Heart left ventricle (tissue), 16 donors: ENCODE measurements at regions of chr17 and their contacts with region 1.

Region 1: DNA sequence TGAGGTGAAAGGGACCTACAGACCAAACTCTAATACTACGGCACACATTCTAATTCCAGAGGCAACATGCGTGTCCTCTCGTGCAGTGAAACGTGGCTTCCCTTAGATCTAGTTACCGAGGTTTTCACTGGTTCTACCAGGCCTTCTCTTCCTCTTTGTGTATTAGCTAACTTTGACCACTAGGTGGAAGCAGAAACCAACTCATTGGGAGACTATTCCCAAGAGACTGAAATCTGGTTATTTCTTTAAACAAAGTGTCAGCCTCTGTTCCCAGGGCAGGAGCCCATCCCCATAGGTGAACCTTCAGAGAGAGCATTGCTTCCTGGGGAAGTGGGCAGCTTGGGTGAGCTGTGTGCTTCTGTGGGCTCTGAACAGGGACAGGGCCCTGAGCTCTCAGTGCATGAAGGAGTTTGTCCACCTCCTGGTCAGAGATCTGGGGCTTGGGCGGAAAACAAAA is 19.7 kb upstream of the RCVRN start:
- DNase-seq: no peak
- ATAC-seq: peak in 3 of 4 donors; percentile 44 to 58 (median 48)
- H3K4me3 ChIP-seq: no peak overlapping the region
- H3K27ac ChIP-seq: no peak overlapping the region
- H3K4me1 ChIP-seq: peaks cover 0 to 8% (median 0%) of the 10 kb centered on the region in 12 donors
- H3K27me3 ChIP-seq: no peaks in the 10 kb centered on the region
- CTCF ChIP-seq: peak; percentile 71 to 93 (median 82)
- POLR2A ChIP-seq: no peak

Region 2: DNA sequence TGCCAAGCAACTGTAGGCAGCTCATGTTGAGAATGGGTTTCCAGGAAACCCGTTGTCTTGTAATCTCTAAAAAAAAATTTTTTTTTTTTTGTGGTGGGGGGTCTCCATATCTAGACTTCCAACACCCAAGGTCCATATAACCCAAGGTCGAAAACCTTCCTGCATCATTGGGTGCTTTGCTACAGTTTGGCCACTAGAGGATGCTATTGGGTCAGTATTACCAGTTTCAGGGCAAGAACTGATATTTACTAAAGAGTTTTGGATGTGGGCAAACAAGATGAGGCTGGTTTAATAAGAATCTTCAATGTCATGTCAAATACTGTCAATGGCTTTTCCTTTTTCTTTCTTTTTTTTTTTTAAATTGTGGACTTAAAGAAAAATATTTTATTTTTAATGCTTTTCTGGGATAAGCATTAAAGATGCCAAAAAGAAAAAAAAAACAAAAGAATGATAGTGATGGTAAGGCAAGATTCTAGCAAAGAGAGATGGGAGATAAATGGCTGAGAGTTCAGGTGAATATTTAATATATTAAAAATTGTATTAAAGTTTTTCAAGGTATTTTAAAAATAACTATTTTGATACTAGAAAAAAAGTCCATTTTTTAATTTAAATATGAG is 195.6 kb before region 1 on chr17:
- intact Hi-C with region 1: loop called in 2 of 10 experiments (anchors 5 to 10 kb)
- DNase-seq: no peak
- ATAC-seq: peak in 3 of 4 donors; percentile 54 to 63 (median 61)
- H3K4me3 ChIP-seq: no peak overlapping the region
- H3K27ac ChIP-seq: no peak overlapping the region
- H3K4me1 ChIP-seq: no peaks in the 10 kb centered on the region
- H3K27me3 ChIP-seq: peaks cover 0 to 34% (median 9%) of the 10 kb centered on the region in 9 donors
- CTCF ChIP-seq: peak; percentile 90 to 97 (median 94)
- POLR2A ChIP-seq: no peak

Region 3: DNA sequence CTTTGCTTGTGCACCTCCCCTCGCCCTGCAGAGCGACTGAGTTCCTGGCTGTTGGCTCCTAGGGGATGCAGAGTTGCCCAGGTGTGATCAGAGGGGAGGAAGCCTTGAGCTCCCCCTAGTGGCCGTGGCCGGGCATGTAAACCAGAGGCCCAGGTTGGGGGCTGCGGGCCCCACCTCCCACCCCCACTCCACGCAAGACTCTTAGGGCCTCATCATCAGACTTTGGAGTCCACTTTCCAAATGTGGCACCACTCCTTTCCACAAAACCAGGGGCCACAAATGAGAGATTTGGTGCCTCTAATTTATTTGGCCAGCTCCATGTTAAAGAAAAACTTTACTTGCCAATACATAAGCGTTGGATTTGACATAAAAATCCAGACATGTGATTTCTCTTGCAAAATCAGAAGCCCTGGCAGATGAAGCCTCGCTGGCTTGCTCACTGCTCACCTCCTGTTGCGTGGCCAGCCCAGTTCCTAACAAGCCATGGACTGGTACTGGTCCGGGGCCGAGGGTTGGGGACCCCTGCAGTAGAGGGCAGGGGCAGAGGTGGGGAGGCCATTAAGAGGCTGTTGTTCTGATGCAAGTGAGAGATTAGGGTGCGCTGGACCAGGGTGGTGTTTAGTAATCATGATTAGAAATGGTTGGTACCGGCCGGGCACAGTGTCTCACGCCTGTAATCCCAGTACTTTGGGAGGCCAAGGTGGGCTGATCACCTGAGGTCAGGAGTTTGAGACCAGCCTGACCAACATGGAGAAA is 302.3 kb after region 1 on chr17:
- intact Hi-C with region 1: loop called in 1 of 10 experiments (anchors 10 kb)
- DNase-seq: peak; percentile 32 to 75 (median 50)
- ATAC-seq: peak in 3 of 4 donors; percentile 75 to 88 (median 81)
- H3K4me3 ChIP-seq: no peak overlapping the region
- H3K27ac ChIP-seq: no peak overlapping the region
- H3K4me1 ChIP-seq: no peaks in the 10 kb centered on the region
- H3K27me3 ChIP-seq: no peaks in the 10 kb centered on the region
- CTCF ChIP-seq: peak; percentile 61 to 89 (median 73)
- POLR2A ChIP-seq: no peak

Region 4: GRCh38 chr17:10316801-10317542 is 392.2 kb after region 1 on chr17:
- intact Hi-C with region 1: loop called in 3 of 10 experiments (anchors 10 kb)
- DNase-seq: peak; percentile 45 to 68 (median 68)
- ATAC-seq: peak in 2 of 4 donors; percentile 63 to 72
- H3K4me3 ChIP-seq: no peak overlapping the region
- H3K27ac ChIP-seq: no peak overlapping the region
- H3K4me1 ChIP-seq: peaks cover 0 to 11% (median 0%) of the 10 kb centered on the region in 12 donors
- H3K27me3 ChIP-seq: peaks cover 0 to 3% (median 0%) of the 10 kb centered on the region in 9 donors
- CTCF ChIP-seq: peak; percentile 22 to 75 (median 52)
- POLR2A ChIP-seq: no peak

Region 5: GRCh38 chr17:10618202-10618635 is 693.5 kb after region 1 on chr17:
- intact Hi-C with region 1: loop called (anchors 2 to 10 kb)
- DNase-seq: peak in 4 of 5 donors; percentile 39 to 66 (median 44)
- ATAC-seq: peak; percentile 73 to 91 (median 90)
- H3K4me3 ChIP-seq: no peak overlapping the region
- H3K27ac ChIP-seq: no peak overlapping the region
- H3K4me1 ChIP-seq: peaks cover 0 to 15% (median 0%) of the 10 kb centered on the region in 12 donors
- H3K27me3 ChIP-seq: no peaks in the 10 kb centered on the region
- CTCF ChIP-seq: peak; percentile 75 to 89 (median 82)
- POLR2A ChIP-seq: no peak